ENCODE measurements at regions of chr10 and their contacts with region 1.

Region 1: DNA sequence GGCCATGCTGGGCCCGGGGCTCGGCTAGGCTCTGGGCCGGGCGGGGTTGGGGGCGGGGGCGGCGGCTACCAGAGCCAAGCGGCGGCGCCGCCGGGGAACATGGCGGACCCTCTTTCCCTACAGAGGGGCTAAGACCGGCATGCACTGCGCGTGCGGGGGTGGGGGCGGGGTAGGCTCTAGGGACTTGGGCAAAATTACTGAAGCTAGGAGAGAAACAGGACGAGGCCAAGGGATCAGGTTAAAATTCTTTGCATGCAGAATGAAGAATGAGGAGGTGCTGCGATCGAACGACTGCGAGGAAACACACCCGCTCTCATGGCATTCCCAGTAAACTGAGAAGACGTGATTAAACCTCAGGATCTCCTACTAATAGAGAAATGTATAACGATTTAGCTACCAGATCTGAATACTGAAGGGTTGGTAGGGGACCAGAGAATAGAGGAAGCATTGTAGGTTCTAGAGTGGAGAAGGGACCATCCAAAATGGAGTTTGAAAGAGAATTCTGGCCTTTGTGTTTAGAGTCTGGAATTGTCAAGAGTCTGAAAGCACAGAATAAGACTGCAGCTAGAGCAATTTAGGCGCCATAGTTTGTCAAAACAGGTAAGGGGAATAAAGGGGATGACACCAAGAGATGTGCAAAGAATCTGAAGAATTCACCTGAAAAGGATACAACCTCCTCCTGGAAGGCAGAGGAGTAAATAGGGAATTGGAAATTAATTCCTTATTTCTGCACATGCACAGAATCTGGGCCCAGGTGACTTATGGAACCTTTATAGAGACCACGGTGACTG is at the start of gene PPP3CB:
- DNase-seq: peak; percentile 73
- H3K4me3 ChIP-seq: peak within 1 kb of the TSS; percentile 89
- H3K27me3 ChIP-seq: no peaks in the 10 kb centered on the region
- CTCF ChIP-seq: no peak
- polyA plus RNA-seq, gene PPP3CB: 11.7 and 18.6 TPM in 2 replicates

Region 2: DNA sequence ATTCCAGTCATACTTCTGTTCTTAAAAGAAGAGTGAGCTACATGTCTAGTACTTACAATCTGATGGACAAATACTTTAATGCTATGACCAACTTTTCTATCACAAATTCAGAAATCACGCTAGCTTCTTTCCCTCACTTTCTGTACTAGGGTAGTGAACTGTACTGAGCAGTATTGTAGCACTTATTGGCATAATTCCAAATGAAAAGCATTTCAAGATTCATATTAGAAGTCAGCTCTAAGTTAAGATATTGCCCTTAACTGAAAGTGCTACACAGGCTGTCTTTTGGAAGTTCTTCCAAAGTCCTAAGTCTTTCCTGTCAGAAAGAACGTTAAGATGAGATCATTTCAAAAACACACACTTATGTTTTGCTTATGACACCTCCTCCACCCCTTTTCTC is 412.9 kb before region 1 on chr10:
- CTCF ChIA-PET with region 1: no interaction called
- POLR2A ChIA-PET with region 1: interaction called, 10 read pairs
- DNase-seq: no peak
- H3K4me3 ChIP-seq: no peak overlapping the region
- H3K27me3 ChIP-seq: no peaks in the 10 kb centered on the region
- CTCF ChIP-seq: no peak

Region 3: GRCh38 chr10:73529089-73529832 is 33.2 kb after region 1 on chr10:
- CTCF ChIA-PET with region 1: no interaction called
- POLR2A ChIA-PET with region 1: no interaction called
- DNase-seq: peak; percentile 14
- H3K4me3 ChIP-seq: no peak overlapping the region
- H3K27me3 ChIP-seq: no peaks in the 10 kb centered on the region
- CTCF ChIP-seq: peak; percentile 72

Region 4: GRCh38 chr10:73597346-73597745 is 101.3 kb after region 1 on chr10:
- CTCF ChIA-PET with region 1: no interaction called
- POLR2A ChIA-PET with region 1: interaction called, 11 read pairs
- DNase-seq: no peak
- H3K4me3 ChIP-seq: no peak overlapping the region
- H3K27me3 ChIP-seq: no peaks in the 10 kb centered on the region
- CTCF ChIP-seq: no peak